Sigmoid colon (tissue), 7 donors: ENCODE measurements at regions of chr10 and their contacts with region 1.

Region 1: GRCh38 chr10:95536017-95536416 is 25.2 kb downstream of the SORBS1 start:
- DNase-seq: peak; percentile 95
- H3K4me3 ChIP-seq: no peak overlapping the region
- H3K27ac ChIP-seq: peak overlapping the region; percentile 93 to 98 (median 96)
- H3K4me1 ChIP-seq: peaks cover 0 to 100% (median 95%) of the 10 kb centered on the region in 4 donors
- H3K27me3 ChIP-seq: no peaks in the 10 kb centered on the region
- CTCF ChIP-seq: peak in 1 of 4 experiments; percentile 27
- EP300 ChIP-seq: peak; percentile 98 to 100 (median 99)
- POLR2A ChIP-seq: no peak

Region 2: DNA sequence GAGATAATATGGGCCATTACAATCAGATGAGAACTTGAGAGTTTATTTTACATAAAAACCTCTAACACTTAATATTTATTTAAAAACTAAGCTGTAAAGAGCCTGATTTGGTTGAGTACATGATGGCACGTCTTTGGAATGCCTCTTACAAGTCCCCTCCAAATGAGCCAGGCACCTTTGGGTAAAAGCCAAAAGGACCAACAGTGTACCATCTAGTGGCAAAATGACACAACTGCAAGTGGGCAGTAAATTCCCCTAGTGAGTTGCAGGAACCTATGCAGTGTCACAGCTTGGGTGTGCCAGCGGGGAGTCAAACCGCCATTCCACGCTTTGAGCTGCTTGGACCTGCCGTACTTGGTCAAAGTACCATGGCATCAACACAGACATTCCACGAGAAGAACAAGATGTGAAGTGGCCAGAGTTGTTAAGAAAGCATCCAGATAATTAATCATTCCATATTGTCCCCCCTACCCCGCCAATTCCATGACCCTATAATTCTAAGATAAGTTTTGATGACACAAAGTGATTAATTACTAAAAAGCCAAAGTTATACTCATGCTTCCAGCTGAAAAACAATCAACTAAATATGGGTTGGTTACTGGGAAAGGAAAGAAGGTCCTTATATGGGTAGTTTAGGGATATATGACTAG is 90.1 kb before region 1 on chr10:
- intact Hi-C with region 1: loop called (anchors 5 kb)
- DNase-seq: peak; percentile 86
- H3K4me3 ChIP-seq: no peak overlapping the region
- H3K27ac ChIP-seq: peak overlapping the region; percentile 84 to 98 (median 90)
- H3K4me1 ChIP-seq: peaks cover 0 to 100% (median 93%) of the 10 kb centered on the region in 4 donors
- H3K27me3 ChIP-seq: no peaks in the 10 kb centered on the region
- CTCF ChIP-seq: peak; percentile 39 to 77 (median 70)
- EP300 ChIP-seq: peak in 3 of 4 donors; percentile 59 to 88 (median 88)
- POLR2A ChIP-seq: no peak

Region 3: DNA sequence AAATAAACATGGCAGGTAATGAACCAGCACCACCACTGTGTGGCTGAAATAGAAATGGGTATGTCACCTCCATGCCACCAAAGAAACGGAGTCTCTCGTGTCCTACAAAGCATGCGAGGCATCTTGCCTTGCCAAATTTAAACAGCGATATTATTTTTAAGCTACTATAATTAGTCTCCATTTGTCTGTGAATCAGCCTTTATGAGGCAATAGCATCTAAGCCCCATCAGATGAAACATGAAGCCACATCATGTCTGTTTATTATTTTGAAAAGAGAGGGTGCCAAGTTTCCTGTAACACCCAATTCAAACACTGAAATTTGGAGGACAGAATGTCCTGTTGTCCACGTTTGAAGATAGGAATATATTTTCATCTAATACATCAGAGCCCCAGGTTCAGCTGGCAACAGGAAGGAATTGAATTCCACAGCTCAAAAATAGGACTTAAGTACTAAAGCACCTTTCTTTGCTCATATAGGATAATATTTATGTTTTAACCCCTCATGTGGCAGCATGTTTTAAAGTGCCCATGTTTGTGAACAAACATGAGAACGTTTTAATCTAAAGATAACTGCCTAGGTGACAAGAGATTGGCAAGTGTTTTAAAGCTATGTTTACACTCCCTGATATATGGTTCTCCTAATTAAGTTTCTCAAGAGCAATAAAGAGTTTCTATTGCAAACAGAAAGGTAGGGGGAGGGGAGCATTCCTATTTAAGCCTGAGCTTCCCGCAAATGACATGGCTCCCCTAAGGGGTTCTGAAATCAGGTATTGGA is 61.6 kb before region 1 on chr10:
- intact Hi-C with region 1: loop called (anchors 2 kb)
- DNase-seq: no peak
- H3K4me3 ChIP-seq: no peak overlapping the region
- H3K27ac ChIP-seq: peak overlapping the region; percentile 84 to 98 (median 90)
- H3K4me1 ChIP-seq: peaks cover 0 to 99% (median 99%) of the 10 kb centered on the region in 4 donors
- H3K27me3 ChIP-seq: no peaks in the 10 kb centered on the region
- CTCF ChIP-seq: no peak
- EP300 ChIP-seq: peak; percentile 97 to 100 (median 98)
- POLR2A ChIP-seq: no peak

Region 4: GRCh38 chr10:95513941-95514392 is 22.1 kb before region 1 on chr10:
- intact Hi-C with region 1: loop called (anchors 2 kb)
- DNase-seq: peak; percentile 86
- H3K4me3 ChIP-seq: no peak overlapping the region
- H3K27ac ChIP-seq: peak overlapping the region; percentile 93 to 98 (median 96)
- H3K4me1 ChIP-seq: peaks cover 0 to 99% (median 96%) of the 10 kb centered on the region in 4 donors
- H3K27me3 ChIP-seq: no peaks in the 10 kb centered on the region
- CTCF ChIP-seq: no peak
- EP300 ChIP-seq: no peak
- POLR2A ChIP-seq: no peak